Left ventricle myocardium inferior (tissue), 1 donor: ENCODE measurements at regions of chr16 and their contacts with region 1.

Region 1: GRCh38 chr16:57167953-57168352 is 17.9 kb downstream of the PSME3IP1 start:
- DNase-seq: no peak
- H3K4me3 ChIP-seq: no peak overlapping the region
- H3K27ac ChIP-seq: peak overlapping the region; percentile 40
- H3K4me1 ChIP-seq: peaks cover 22% of the 10 kb centered on the region
- H3K27me3 ChIP-seq: no peaks in the 10 kb centered on the region
- CTCF ChIP-seq: peak; percentile 73

Region 2: DNA sequence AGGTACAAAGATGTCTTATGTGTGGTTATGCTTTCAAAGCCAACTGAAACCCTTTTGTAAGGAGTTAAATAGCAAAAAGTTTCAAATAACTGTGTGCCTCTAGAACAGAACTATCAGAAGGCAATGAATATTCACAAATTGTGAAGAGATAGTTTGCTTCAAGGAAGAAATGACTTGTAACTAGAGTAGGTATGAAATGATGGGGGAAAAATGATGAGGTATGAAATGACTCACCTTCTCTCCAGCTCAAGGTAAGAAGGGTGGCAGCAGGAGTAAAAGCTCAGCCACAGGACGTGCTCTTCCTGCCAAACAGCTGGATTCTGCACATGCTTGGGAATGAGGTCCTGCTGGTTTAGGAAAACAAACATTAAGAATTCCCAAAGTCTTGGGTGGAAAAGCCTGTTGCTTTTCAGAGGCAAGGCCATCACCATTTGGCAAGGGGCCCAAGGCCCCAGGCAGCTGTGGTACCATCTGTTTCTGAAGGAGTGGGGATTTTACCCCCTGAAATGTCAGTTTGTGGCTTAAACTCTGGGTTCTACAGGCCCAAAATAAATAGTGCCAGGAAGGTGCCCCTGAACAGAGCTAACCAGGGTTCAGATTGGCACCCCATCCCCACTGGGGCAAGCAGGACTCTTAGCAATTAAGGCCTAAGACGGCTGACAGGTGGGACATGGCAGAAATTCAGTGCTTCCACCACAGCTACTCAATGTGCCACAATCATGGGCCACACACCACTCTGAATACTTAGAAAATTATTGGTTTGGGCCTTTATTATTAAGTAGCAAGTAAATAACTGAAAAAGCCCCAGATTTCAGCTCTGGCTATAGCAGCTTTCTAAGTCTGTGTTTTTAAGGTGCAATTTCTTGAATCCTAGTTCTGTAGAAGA is 222.8 kb before region 1 on chr16:
- intact Hi-C with region 1: no loop called
- DNase-seq: no peak
- H3K4me3 ChIP-seq: no peak overlapping the region
- H3K27ac ChIP-seq: no peak overlapping the region
- H3K4me1 ChIP-seq: peaks cover 9% of the 10 kb centered on the region
- H3K27me3 ChIP-seq: no peaks in the 10 kb centered on the region
- CTCF ChIP-seq: no peak

Region 3: DNA sequence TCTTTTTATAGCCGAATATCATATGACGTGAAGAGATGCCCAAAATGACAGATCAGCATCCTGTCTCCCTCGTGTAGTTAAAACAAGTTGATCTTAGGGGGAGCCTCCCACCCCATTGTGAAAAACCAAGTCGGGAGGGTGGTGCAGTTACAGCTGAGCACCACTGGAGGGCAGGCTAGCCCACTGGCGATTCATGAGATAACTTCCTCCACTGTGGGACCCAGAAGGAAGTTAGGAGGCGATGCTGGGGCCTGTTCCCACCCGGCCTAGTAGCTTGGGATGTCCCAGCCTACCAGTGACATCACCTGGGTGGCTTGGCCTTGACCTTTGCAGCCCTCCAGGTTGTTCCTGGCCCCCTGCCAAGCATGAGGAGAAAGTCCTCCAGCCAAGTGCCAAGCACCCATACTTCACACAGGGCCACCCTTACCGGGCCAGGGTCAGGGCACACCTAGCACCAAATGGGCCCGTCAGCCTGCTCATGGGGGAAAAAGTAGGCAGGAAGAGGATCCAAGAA is 83.6 kb before region 1 on chr16:
- intact Hi-C with region 1: loop called (anchors 5 kb)
- DNase-seq: peak; percentile 55
- H3K4me3 ChIP-seq: no peak overlapping the region
- H3K27ac ChIP-seq: peak overlapping the region; percentile 24
- H3K4me1 ChIP-seq: peaks cover 8% of the 10 kb centered on the region
- H3K27me3 ChIP-seq: no peaks in the 10 kb centered on the region
- CTCF ChIP-seq: peak; percentile 99

Region 4: DNA sequence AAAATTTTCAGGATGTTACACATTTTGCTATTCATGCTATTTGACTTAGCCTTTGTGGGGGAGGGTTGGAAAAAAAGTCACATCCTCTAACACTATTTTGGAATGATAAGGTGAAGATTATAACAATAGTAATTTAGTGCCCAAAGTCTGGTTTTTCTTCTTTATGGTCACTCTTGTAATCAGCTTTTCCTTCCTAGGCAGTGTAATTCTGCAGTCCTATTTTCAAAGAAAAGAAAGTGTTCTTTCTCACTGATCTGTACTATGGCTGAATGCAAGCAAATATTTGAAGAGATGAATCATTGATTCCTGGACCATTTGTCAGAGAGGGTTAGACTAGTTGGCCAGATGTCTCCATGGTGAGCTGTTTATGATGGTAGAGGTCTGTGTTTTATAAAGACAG is 26.6 kb after region 1 on chr16:
- intact Hi-C with region 1: no loop called
- DNase-seq: no peak
- H3K4me3 ChIP-seq: no peak overlapping the region
- H3K27ac ChIP-seq: no peak overlapping the region
- H3K4me1 ChIP-seq: peaks cover 78% of the 10 kb centered on the region
- H3K27me3 ChIP-seq: no peaks in the 10 kb centered on the region
- CTCF ChIP-seq: no peak

Region 5: DNA sequence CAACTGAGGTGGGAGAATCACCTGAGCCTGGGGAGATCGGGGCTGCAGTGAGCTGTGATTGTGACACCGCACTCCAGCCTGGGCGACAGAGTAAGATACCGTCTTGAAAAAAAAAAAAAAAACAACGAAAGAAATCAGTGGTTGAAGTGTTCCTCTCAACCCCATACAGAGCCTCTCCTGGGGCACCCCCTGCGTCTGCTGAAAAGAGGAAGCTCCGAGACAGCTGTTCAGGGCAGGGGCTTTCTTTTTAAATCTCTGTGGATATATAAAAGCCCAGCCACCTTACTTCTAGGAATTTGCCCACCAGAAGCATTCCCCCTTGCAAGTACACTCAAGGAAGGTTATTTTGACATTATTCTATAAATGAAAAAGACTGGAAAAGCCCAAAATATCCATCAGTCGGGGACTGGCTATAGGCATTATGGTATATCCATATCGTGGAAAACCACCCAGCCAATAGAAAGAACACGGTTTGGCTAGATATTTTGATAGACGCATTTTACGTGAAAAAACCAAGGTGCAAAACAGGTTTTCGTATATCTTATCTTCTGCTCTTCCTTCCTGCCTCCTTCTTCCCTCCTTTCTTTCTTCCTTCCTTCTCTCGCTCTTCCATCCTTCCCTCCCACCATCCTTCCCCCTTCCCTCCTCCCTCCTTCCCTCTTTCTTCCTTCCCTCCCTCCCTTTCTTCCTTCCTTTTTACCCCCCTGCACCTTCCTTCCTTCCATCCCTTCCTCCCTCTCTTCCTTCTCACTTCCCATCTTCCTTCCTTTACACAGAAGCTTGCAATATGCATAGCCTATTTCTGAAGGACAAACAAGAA is 181.5 kb after region 1 on chr16:
- intact Hi-C with region 1: no loop called
- DNase-seq: no peak
- H3K4me3 ChIP-seq: no peak overlapping the region
- H3K27ac ChIP-seq: no peak overlapping the region
- H3K4me1 ChIP-seq: no peaks in the 10 kb centered on the region
- H3K27me3 ChIP-seq: peaks cover 10% of the 10 kb centered on the region
- CTCF ChIP-seq: no peak